ENCODE measurements at regions of chr9 and their contacts with region 1.

Region 1: DNA sequence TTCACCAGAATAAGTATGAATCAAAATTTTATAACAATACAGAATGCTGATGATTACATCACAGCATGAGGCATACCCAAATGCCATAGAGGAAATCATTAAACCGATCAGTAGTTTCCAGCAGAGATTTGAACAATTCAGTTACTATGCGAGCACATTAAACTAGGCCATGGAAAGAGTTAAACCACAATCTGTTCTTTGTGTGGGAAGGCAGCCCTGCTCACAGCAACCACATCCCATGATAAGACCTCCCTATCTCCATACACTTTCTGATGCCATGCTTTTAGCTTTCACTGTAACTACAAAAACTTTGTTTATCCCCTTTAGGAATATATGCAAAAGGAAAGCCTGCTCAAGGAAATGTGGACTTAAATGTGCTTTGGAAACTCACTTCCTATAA is 4.5 kb downstream of the NFIB start:
- DNase-seq: no peak
- ATAC-seq: peak; percentile 24 to 41
- H3K4me3 ChIP-seq: peak overlapping the region; percentile 51
- H3K27ac ChIP-seq: peak overlapping the region; percentile 43
- H3K4me1 ChIP-seq: peaks cover 8% of the 10 kb centered on the region
- H3K27me3 ChIP-seq: no peaks in the 10 kb centered on the region

Region 2: GRCh38 chr9:14203356-14204056 is 105.9 kb before region 1 on chr9:
- intact Hi-C with region 1: loop called in 1 of 4 experiments (anchors 10 kb)
- DNase-seq: peak; percentile 81 to 91 (median 90)
- ATAC-seq: peak; percentile 82 to 83
- H3K4me3 ChIP-seq: peak overlapping the region; percentile 44
- H3K27ac ChIP-seq: peak overlapping the region; percentile 77
- H3K4me1 ChIP-seq: peaks cover 28% of the 10 kb centered on the region
- H3K27me3 ChIP-seq: no peaks in the 10 kb centered on the region

Region 3: GRCh38 chr9:14243514-14244042 is 65.8 kb before region 1 on chr9:
- intact Hi-C with region 1: no loop called
- DNase-seq: no peak
- ATAC-seq: no peak
- H3K4me3 ChIP-seq: no peak overlapping the region
- H3K27ac ChIP-seq: no peak overlapping the region
- H3K4me1 ChIP-seq: peaks cover 10% of the 10 kb centered on the region
- H3K27me3 ChIP-seq: no peaks in the 10 kb centered on the region

Measured in right cardiac atrium (tissue), 5 donors.